ENCODE measurements at regions of chr4 and their contacts with region 1.

Region 1: GRCh38 chr4:153318696-153319320 is 25.7 kb upstream of the MND1 start:
- DNase-seq: peak in 1 of 2 donors; percentile 36
- ATAC-seq: peak in 7 of 8 donors; percentile 47 to 82 (median 73)
- H3K4me3 ChIP-seq: no peak overlapping the region
- H3K27ac ChIP-seq: no peak overlapping the region
- H3K4me1 ChIP-seq: no peaks in the 10 kb centered on the region
- H3K27me3 ChIP-seq: no peaks in the 10 kb centered on the region
- CTCF ChIP-seq: peak; percentile 45 to 83 (median 69)

Region 2: GRCh38 chr4:153142700-153143438 is 175.9 kb before region 1 on chr4:
- intact Hi-C with region 1: loop called (anchors 1 to 5 kb)
- DNase-seq: peak; percentile 62 to 72
- ATAC-seq: peak; percentile 75 to 92 (median 78)
- H3K4me3 ChIP-seq: peak overlapping the region in 3 of 10 donors; percentile 21 to 31 (median 22)
- H3K27ac ChIP-seq: no peak overlapping the region
- H3K4me1 ChIP-seq: peaks cover 0 to 15% (median 9%) of the 10 kb centered on the region in 9 donors
- H3K27me3 ChIP-seq: peaks cover 0 to 6% (median 0%) of the 10 kb centered on the region in 7 donors
- CTCF ChIP-seq: peak; percentile 69 to 94 (median 84)

Region 3: DNA sequence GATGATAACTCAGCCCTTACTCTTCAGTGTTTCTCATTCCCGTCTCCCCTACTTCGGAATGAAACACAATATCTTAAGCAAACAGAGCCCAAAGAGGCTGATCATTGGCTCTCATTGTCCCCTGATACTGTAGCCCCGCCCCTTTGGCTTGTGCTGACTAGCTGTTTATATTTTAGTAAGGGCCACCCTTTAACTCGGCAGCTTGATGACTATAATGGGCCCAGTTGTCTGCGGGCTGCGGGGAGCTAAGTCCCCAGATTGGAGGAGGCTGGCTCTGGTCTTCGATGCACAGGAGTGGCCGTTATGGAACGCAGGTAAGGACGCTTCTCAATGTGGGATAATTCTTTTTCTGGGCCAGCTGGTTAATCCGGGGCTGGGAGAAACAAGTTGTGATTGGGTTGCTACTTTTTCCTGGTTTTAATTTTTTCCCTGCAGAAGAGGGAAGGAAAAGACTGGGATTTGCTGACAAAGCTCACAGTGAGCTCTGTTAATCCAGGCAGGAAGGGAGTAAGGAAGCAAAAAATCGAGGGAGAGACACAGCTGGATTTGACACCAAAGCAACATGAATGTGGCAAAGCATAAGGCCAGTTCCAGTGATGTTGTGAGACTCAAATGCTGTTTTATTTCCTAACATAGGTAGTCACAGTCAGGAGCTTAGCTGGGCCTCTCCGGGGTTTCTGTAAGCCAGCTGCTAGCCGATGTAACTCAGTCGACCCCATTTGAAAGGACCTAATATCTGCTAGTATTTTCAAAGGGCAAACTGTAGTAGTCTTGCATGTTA is 114.4 kb before region 1 on chr4 and contains the start of gene TRIM2:
- intact Hi-C with region 1: loop called in 8 of 10 experiments (anchors 1 to 5 kb)
- DNase-seq: peak; percentile 58 to 80
- ATAC-seq: peak; percentile 81 to 94 (median 88)
- H3K4me3 ChIP-seq: peak within 1 kb of the TSS in 9 of 10 donors; percentile 22 to 50 (median 40)
- H3K27ac ChIP-seq: peak within 1 kb of the TSS in 6 of 10 donors; percentile 8 to 56 (median 37)
- H3K4me1 ChIP-seq: peaks cover 0 to 32% (median 3%) of the 10 kb centered on the region in 9 donors
- H3K27me3 ChIP-seq: no peaks in the 10 kb centered on the region
- CTCF ChIP-seq: no peak
- total RNA-seq, gene TRIM2: 15.2 to 33.2 (median 20.7) TPM

Region 4: GRCh38 chr4:153221783-153222706 is 96.8 kb before region 1 on chr4:
- intact Hi-C with region 1: loop called in 1 of 10 experiments (anchors 10 kb)
- DNase-seq: peak; percentile 58
- ATAC-seq: peak; percentile 62 to 75 (median 71)
- H3K4me3 ChIP-seq: peak overlapping the region; percentile 68 to 89 (median 82)
- H3K27ac ChIP-seq: peak overlapping the region; percentile 84 to 97 (median 96)
- H3K4me1 ChIP-seq: peaks cover 0 to 52% (median 15%) of the 10 kb centered on the region in 9 donors
- H3K27me3 ChIP-seq: peaks cover 0 to 13% (median 0%) of the 10 kb centered on the region in 7 donors
- CTCF ChIP-seq: no peak

Region 5: GRCh38 chr4:153232768-153233167 is 86.0 kb before region 1 on chr4:
- intact Hi-C with region 1: loop called in 3 of 10 experiments (anchors 1 to 10 kb)
- DNase-seq: peak; percentile 44 to 66
- ATAC-seq: peak; percentile 74 to 95 (median 88)
- H3K4me3 ChIP-seq: no peak overlapping the region
- H3K27ac ChIP-seq: peak overlapping the region in 2 of 10 donors; percentile 36 to 37
- H3K4me1 ChIP-seq: peaks cover 8 to 65% (median 33%) of the 10 kb centered on the region in 9 donors
- H3K27me3 ChIP-seq: no peaks in the 10 kb centered on the region
- CTCF ChIP-seq: peak in 7 of 9 donors; percentile 27 to 57 (median 45)